Naive thymus-derived CD4-positive, alpha-beta T cell (primary cell): ENCODE measurements at regions of chr22 and their contacts with region 1.

Region 1: DNA sequence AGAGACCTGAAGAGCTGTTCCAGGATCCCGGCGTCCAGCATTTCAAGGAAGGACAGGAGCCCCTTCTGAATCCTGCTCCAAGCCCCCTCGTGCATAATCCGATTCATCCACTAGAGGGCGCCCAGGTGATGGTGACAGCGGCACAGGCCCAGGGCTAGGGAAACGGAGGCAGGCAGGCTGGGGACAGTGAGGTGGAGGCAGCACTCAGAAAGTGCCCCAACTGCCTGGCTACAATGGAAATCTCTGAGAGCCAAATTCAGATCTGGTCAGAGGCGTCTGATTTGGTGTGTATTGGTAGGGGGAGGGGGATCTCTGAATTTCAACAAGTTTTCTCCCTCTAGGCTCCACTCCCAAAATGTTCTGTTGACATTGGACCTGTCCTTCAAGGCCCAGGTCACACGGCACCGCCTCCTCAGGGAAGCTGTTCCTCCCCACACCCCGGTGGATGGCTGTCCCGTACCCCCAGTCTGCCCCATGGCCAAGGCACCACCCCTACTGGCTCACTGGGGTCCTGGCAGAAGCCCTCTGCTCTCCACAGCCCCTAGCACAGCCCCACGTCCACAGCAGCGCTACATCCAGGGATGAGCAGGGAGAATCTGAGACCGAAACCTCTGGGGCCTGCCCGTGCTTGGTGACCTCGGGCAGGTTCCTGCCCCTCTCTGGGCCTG is 142.9 kb downstream of the CRYBB2 start:
- DNase-seq: peak in 8 of 9 donors; percentile 34 to 79 (median 50)
- ATAC-seq: peak; percentile 60
- H3K4me3 ChIP-seq: no peak overlapping the region
- H3K4me3 Mint-ChIP-seq: no peak overlapping the region
- H3K27ac ChIP-seq: no peak overlapping the region
- H3K27ac Mint-ChIP-seq: no peak overlapping the region
- H3K4me1 ChIP-seq: no peaks in the 10 kb centered on the region
- H3K4me1 Mint-ChIP-seq: peaks cover 0 to 6% (median 0%) of the 10 kb centered on the region in 7 donors
- H3K27me3 ChIP-seq: no peaks in the 10 kb centered on the region
- H3K27me3 Mint-ChIP-seq: no peaks in the 10 kb centered on the region

Region 2: GRCh38 chr22:25772288-25772687 is 409.9 kb after region 1 on chr22:
- CTCF ChIA-PET with region 1: no interaction called
- POLR2A ChIA-PET with region 1: no interaction called
- intact Hi-C with region 1: loop called in 1 of 2 experiments (anchors 2 kb)
- DNase-seq: no peak
- ATAC-seq: no peak
- H3K4me3 ChIP-seq: no peak overlapping the region
- H3K4me3 Mint-ChIP-seq: peak overlapping the region in 1 of 10 donors; percentile 58
- H3K27ac ChIP-seq: no peak overlapping the region
- H3K27ac Mint-ChIP-seq: peak overlapping the region in 2 of 9 donors; percentile 14 to 89
- H3K4me1 ChIP-seq: no peaks in the 10 kb centered on the region
- H3K4me1 Mint-ChIP-seq: peaks cover 0 to 55% (median 5%) of the 10 kb centered on the region in 7 donors
- H3K27me3 ChIP-seq: no peaks in the 10 kb centered on the region
- H3K27me3 Mint-ChIP-seq: peaks cover 0 to 10% (median 4%) of the 10 kb centered on the region in 5 donors